ENCODE measurements at regions of chr2 and their contacts with region 1.

Region 1: DNA sequence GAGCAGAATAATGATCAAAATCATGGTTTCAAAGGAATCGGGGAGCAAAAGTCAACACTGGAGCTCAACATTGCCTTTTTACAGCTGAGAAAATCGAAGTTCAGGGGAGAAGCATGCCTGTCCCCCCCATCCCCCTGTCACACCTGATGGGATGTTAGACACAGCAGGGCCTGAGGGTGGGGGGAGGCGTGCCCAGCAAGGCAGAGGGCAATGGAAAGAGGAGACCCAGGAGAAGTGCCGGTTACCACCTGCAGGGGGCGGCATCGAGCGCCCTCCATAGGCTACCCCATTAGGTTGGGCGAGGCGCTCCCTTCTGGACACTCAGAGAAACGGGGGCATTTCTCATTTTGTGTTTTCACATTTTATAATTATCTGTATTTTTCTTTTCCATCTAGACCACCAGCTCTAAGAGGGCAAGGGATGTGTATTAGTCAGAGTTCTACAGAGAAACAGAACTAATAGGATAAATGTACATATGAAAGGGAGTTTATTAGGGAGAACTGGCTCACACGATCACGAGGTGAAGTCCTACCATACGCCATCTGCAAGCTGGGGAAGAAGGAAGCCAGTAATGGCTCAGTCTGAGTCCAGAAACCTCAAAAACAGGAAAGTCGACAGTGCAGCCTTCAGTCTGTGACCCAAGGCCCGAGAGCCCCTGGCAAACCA is 271.3 kb downstream of the LRATD1 start:
- DNase-seq: peak in 13 of 14 experiments; percentile 1 to 45 (median 10)
- ATAC-seq: no peak
- H3K4me3 ChIP-seq: no peak overlapping the region
- H3K4me3 Mint-ChIP-seq: no peak overlapping the region
- H3K27ac ChIP-seq: no peak overlapping the region
- H3K27ac Mint-ChIP-seq: no peak overlapping the region
- H3K4me1 ChIP-seq: no peaks in the 10 kb centered on the region
- H3K4me1 Mint-ChIP-seq: no peaks in the 10 kb centered on the region
- H3K27me3 ChIP-seq: no peaks in the 10 kb centered on the region
- H3K27me3 Mint-ChIP-seq: peaks cover 6% of the 10 kb centered on the region
- CTCF ChIP-seq: peak; percentile 34

Region 2: GRCh38 chr2:15577071-15577735 is 673.4 kb after region 1 on chr2:
- CTCF ChIA-PET with region 1: no interaction called
- POLR2A ChIA-PET with region 1: no interaction called
- intact Hi-C with region 1: loop called in 1 of 2 experiments (anchors 10 kb)
- DNase-seq: peak; percentile 70 to 93 (median 87)
- ATAC-seq: peak; percentile 100
- H3K4me3 ChIP-seq: no peak overlapping the region
- H3K4me3 Mint-ChIP-seq: no peak overlapping the region
- H3K27ac ChIP-seq: no peak overlapping the region
- H3K27ac Mint-ChIP-seq: no peak overlapping the region
- H3K4me1 ChIP-seq: peaks cover 3% of the 10 kb centered on the region
- H3K4me1 Mint-ChIP-seq: no peaks in the 10 kb centered on the region
- H3K27me3 ChIP-seq: no peaks in the 10 kb centered on the region
- H3K27me3 Mint-ChIP-seq: no peaks in the 10 kb centered on the region
- CTCF ChIP-seq: peak; percentile 83

Measured in CD4-positive, alpha-beta T cell (primary cell).